ENCODE measurements at regions of chr22 and their contacts with region 1.

Region 1: DNA sequence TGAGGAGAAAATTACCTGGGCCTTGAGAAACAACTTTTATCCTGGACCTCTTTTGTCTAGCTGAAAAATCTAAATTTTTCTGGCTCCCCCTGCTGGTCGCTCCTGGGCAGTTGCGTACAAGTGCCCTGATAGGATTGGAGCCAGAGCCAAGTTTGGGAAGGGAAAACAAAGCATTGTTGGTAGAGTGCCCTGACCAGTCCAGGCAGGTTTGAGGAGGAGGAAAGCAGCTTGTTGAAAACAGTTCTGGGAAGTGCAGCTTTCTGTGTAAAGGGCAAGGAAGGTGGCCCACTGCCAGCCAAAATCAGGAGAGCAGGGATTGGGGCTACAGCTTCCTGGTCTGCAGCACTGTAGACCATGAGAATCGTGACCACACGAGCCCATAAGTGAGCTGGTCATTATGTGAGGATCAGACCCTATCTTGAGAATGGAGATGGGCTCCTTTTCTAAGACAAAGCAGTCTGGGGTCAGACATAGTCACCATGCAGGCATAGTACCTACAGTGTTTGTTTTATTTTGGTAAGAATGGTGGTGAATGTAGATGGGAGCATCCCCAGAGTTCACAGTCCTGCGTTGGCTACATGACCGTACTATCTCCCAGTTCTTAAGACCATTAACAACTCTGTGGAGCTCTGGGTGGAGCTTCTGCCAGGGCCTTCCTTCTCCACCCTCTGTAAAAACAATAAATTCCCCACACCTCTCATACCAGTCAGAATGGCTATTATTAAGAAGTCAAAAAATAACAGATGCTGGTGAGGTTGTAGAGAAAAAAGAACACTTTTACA is 21.3 kb upstream of the PIK3IP1 start:
- DNase-seq: peak; percentile 41 to 86 (median 64)
- ATAC-seq: peak; percentile 79
- H3K4me3 ChIP-seq: no peak overlapping the region
- H3K4me3 Mint-ChIP-seq: no peak overlapping the region
- H3K27ac ChIP-seq: no peak overlapping the region
- H3K27ac Mint-ChIP-seq: no peak overlapping the region
- H3K4me1 ChIP-seq: peaks cover 15% of the 10 kb centered on the region
- H3K4me1 Mint-ChIP-seq: peaks cover 29% of the 10 kb centered on the region
- H3K27me3 ChIP-seq: no peaks in the 10 kb centered on the region
- H3K27me3 Mint-ChIP-seq: no peaks in the 10 kb centered on the region
- CTCF ChIP-seq: peak; percentile 90

Region 2: DNA sequence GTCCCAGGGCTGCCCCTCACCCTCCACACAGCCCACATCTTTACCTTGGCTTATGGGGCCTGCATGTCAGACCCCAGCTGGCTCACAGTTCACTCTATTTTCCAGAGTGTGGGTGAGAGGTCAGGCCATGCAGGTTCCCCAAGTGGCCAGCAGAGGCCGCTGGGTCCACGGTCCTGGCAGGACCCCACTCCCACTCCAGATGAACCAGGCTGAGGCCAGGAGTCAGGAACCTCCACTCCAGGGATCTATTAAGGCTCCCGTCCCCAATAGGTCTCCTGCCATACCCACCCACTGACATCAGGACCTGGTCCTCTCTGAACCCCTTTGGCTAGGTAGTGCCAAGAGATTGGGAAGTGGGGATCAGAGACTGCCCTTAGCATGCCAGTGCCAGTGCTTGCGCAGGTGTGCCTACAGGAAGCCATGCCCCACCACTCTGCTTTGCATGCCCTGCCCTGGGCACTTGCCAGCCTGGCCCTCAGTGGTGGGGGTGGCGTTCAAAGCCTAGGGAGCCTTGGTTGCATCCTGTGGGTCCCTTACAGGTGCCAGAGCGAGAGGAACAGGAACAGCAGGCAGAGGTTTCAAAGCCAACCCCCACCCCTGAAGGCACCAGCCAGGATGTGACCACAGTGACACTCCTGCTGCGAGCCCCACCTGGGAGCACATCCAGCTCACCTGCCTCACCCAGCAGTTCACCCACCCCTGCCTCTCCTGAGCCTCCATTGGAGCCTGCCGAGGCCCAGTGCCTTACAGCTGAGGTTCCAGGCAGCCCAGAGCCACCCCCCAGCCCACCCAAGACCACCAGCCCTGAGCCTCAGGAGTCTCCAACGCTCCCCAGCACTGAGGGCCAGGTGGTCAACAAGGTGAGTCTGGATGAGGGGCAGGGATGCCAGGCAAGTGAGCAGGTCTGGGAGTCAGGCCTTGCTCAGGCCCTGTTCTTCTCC is 224.1 kb before region 1 on chr22:
- CTCF ChIA-PET with region 1: no interaction called
- POLR2A ChIA-PET with region 1: no interaction called
- intact Hi-C with region 1: loop called in 1 of 2 experiments (anchors 1 kb)
- DNase-seq: peak in 11 of 14 experiments; percentile 19 to 68 (median 35)
- ATAC-seq: no peak
- H3K4me3 ChIP-seq: no peak overlapping the region
- H3K4me3 Mint-ChIP-seq: no peak overlapping the region
- H3K27ac ChIP-seq: no peak overlapping the region
- H3K27ac Mint-ChIP-seq: no peak overlapping the region
- H3K4me1 ChIP-seq: peaks cover 14% of the 10 kb centered on the region
- H3K4me1 Mint-ChIP-seq: peaks cover under 1% of the 10 kb centered on the region
- H3K27me3 ChIP-seq: no peaks in the 10 kb centered on the region
- H3K27me3 Mint-ChIP-seq: no peaks in the 10 kb centered on the region
- CTCF ChIP-seq: peak; percentile 68

Region 3: DNA sequence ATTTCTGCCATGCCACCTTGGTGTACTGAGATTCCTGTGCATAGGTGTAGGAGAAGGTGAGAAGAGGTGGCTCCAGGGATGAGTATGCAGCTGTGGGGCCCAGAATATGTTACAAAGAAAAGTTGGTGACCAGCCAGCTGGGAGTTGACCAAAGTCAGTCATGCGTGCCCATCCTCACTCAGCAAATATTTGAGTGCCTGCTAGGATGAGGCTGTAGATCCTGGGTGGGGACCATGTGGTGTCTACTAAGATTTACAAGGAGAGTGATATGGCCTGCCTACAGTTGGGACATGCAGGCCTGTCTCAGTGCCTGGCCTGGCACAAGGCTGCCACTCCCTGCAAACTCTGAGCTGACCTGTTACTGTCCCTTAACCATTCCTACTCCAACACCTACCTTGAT is 134.2 kb before region 1 on chr22:
- CTCF ChIA-PET with region 1: no interaction called
- POLR2A ChIA-PET with region 1: no interaction called
- intact Hi-C with region 1: no loop called
- DNase-seq: no peak
- ATAC-seq: no peak
- H3K4me3 ChIP-seq: no peak overlapping the region
- H3K4me3 Mint-ChIP-seq: no peak overlapping the region
- H3K27ac ChIP-seq: no peak overlapping the region
- H3K27ac Mint-ChIP-seq: no peak overlapping the region
- H3K4me1 ChIP-seq: peaks cover 3% of the 10 kb centered on the region
- H3K4me1 Mint-ChIP-seq: peaks cover 27% of the 10 kb centered on the region
- H3K27me3 ChIP-seq: no peaks in the 10 kb centered on the region
- H3K27me3 Mint-ChIP-seq: no peaks in the 10 kb centered on the region
- CTCF ChIP-seq: no peak

Region 4: DNA sequence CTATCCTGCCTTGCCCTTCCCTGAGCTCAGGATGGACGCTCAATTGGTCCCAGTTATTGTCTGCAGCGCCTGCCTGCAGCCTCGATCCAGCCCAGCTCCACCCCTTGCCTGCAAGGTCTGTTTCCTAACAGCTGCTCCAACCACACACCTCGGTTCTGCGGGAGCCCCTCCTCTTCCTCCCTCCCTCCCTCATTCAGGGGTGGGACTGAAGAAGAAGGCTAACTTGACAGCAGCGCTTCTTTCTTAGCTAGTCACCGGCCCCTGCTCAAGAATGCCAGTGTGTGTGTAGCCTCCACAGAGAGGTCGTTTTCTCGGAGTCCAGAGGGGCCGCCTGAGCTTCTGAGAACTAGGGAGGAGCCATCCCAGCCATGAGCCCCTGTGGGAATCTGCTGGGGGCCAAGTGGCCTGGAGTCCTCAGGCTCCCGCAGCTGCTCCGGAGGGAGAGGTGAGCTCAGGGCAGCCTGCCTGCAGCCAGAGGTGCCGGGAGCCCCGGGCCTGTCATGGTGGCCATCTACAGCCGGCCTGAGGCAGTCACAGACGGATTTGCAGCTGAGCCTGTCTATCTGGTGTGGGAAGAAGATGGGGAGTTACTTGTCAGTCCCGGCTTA is 65.3 kb before region 1 on chr22:
- CTCF ChIA-PET with region 1: interaction called, 4 read pairs
- POLR2A ChIA-PET with region 1: no interaction called
- intact Hi-C with region 1: loop called in 1 of 2 experiments (anchors 2 kb)
- DNase-seq: peak; percentile 50 to 85 (median 64)
- ATAC-seq: peak; percentile 100
- H3K4me3 ChIP-seq: peak overlapping the region; percentile 21
- H3K4me3 Mint-ChIP-seq: peak overlapping the region; percentile 83
- H3K27ac ChIP-seq: no peak overlapping the region
- H3K27ac Mint-ChIP-seq: peak overlapping the region; percentile 34
- H3K4me1 ChIP-seq: peaks cover 33% of the 10 kb centered on the region
- H3K4me1 Mint-ChIP-seq: peaks cover 44% of the 10 kb centered on the region
- H3K27me3 ChIP-seq: no peaks in the 10 kb centered on the region
- H3K27me3 Mint-ChIP-seq: no peaks in the 10 kb centered on the region
- CTCF ChIP-seq: no peak

Region 5: GRCh38 chr22:31272522-31273446 is 40.8 kb before region 1 on chr22:
- CTCF ChIA-PET with region 1: interaction called, 16 read pairs
- POLR2A ChIA-PET with region 1: interaction called, 23 read pairs
- intact Hi-C with region 1: loop called in 1 of 2 experiments (anchors 5 kb)
- DNase-seq: peak in 9 of 14 experiments; percentile 38 to 79 (median 57)
- ATAC-seq: peak; percentile 70
- H3K4me3 ChIP-seq: no peak overlapping the region
- H3K4me3 Mint-ChIP-seq: peak overlapping the region; percentile 45
- H3K27ac ChIP-seq: peak overlapping the region in 1 of 2 donors; percentile 3
- H3K27ac Mint-ChIP-seq: peak overlapping the region; percentile 88
- H3K4me1 ChIP-seq: peaks cover 62% of the 10 kb centered on the region
- H3K4me1 Mint-ChIP-seq: peaks cover 74% of the 10 kb centered on the region
- H3K27me3 ChIP-seq: no peaks in the 10 kb centered on the region
- H3K27me3 Mint-ChIP-seq: no peaks in the 10 kb centered on the region
- CTCF ChIP-seq: peak; percentile 78

Region 6: DNA sequence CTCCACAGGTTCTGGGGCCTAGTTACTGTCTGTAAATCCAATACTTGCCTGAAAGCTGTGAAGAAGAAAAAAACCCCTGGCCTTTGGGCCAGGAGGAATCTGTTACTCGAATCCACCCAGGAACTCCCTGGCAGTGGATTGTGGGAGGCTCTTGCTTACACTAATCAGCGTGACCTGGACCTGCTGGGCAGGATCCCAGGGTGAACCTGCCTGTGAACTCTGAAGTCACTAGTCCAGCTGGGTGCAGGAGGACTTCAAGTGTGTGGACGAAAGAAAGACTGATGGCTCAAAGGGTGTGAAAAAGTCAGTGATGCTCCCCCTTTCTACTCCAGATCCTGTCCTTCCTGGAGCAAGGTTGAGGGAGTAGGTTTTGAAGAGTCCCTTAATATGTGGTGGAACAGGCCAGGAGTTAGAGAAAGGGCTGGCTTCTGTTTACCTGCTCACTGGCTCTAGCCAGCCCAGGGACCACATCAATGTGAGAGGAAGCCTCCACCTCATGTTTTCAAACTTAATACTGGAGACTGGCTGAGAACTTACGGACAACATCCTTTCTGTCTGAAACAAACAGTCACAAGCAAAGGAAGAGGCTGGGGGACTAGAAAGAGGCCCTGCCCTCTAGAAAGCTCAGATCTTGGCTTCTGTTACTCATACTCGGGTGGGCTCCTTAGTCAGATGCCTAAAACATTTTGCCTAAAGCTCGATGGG is 34.8 kb before region 1 on chr22:
- CTCF ChIA-PET with region 1: interaction called, 16 read pairs
- POLR2A ChIA-PET with region 1: interaction called, 23 read pairs
- intact Hi-C with region 1: loop called in 1 of 2 experiments (anchors 5 kb)
- DNase-seq: peak in 11 of 14 experiments; percentile 48 to 87 (median 57)
- ATAC-seq: peak; percentile 73
- H3K4me3 ChIP-seq: peak overlapping the region; percentile 13
- H3K4me3 Mint-ChIP-seq: peak overlapping the region; percentile 79
- H3K27ac ChIP-seq: peak overlapping the region; percentile 75 to 85
- H3K27ac Mint-ChIP-seq: peak overlapping the region; percentile 98
- H3K4me1 ChIP-seq: peaks cover 87% of the 10 kb centered on the region
- H3K4me1 Mint-ChIP-seq: peaks cover 95% of the 10 kb centered on the region
- H3K27me3 ChIP-seq: no peaks in the 10 kb centered on the region
- H3K27me3 Mint-ChIP-seq: no peaks in the 10 kb centered on the region
- CTCF ChIP-seq: no peak

Region 7: GRCh38 chr22:31295831-31296657 is 17.5 kb before region 1 on chr22:
- CTCF ChIA-PET with region 1: interaction called, 73 read pairs
- POLR2A ChIA-PET with region 1: interaction called, 113 read pairs
- intact Hi-C with region 1: loop called (anchors 1 kb)
- DNase-seq: peak in 1 of 14 experiments; percentile 33
- ATAC-seq: no peak
- H3K4me3 ChIP-seq: peak overlapping the region; percentile 22
- H3K4me3 Mint-ChIP-seq: peak overlapping the region; percentile 73
- H3K27ac ChIP-seq: peak overlapping the region in 1 of 2 donors; percentile 5
- H3K27ac Mint-ChIP-seq: peak overlapping the region; percentile 73
- H3K4me1 ChIP-seq: peaks cover 41% of the 10 kb centered on the region
- H3K4me1 Mint-ChIP-seq: peaks cover 69% of the 10 kb centered on the region
- H3K27me3 ChIP-seq: no peaks in the 10 kb centered on the region
- H3K27me3 Mint-ChIP-seq: no peaks in the 10 kb centered on the region
- CTCF ChIP-seq: no peak

Region 8: GRCh38 chr22:31477329-31477728 is 163.8 kb after region 1 on chr22:
- CTCF ChIA-PET with region 1: no interaction called
- POLR2A ChIA-PET with region 1: no interaction called
- intact Hi-C with region 1: no loop called
- DNase-seq: no peak
- ATAC-seq: no peak
- H3K4me3 ChIP-seq: no peak overlapping the region
- H3K4me3 Mint-ChIP-seq: no peak overlapping the region
- H3K27ac ChIP-seq: no peak overlapping the region
- H3K27ac Mint-ChIP-seq: no peak overlapping the region
- H3K4me1 ChIP-seq: no peaks in the 10 kb centered on the region
- H3K4me1 Mint-ChIP-seq: peaks cover 30% of the 10 kb centered on the region
- H3K27me3 ChIP-seq: no peaks in the 10 kb centered on the region
- H3K27me3 Mint-ChIP-seq: no peaks in the 10 kb centered on the region
- CTCF ChIP-seq: no peak

Measured in CD4-positive, alpha-beta T cell (primary cell).